ENCODE measurements at regions of chr1 and their contacts with region 1.

Region 1: DNA sequence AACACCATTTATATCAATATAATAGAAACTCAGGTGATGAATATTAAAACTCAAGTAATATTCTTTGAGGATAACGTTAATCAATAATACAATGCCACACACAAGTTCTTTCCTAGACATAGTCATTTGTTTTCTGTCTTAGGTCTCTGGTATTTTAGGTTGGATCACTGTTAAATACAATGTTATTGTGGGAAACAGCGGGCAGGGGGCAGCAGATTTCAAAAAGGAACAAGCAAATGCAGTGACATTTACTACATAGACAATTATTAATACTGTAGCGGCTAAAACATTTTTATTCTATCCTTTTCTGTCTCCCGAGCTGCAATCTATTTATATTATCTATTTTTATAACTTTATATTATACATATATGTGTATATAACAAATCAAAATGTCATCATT is 186.4 kb upstream of the ZNHIT6 start:
- DNase-seq: peak in 1 of 2 experiments; percentile 50
- H3K4me3 ChIP-seq: no peak overlapping the region
- H3K27ac ChIP-seq: no peak overlapping the region
- H3K4me1 ChIP-seq: no peaks in the 10 kb centered on the region
- H3K27me3 ChIP-seq: no peaks in the 10 kb centered on the region
- CTCF ChIP-seq: peak in 2 of 3 experiments; percentile 28 to 47; a peak in 2 of 4 replicates
- EP300 ChIP-seq: no peak
- POLR2A ChIP-seq: no peak
- RAD21 ChIP-seq: peak; percentile 54 to 59

Region 2: DNA sequence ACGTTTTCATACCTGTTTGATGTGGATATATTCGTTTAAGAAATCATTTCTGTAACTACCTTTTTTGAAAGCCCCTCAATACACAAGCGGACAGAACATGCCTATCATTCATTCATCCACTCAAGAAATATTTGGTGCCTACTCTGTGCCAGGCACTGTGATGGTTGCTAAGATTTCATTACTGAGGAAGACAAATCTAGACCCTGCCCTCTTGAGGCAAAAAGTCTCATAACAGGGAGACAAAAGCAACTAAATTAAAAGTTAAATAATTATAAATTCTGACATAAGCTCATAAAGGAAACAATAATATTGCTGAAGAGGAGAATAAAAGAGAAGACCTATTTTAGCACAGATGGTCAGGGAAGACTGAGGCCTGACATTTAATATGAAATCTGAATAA is 17.1 kb after region 1 on chr1:
- CTCF ChIA-PET with region 1: interaction called, 20 read pairs
- POLR2A ChIA-PET with region 1: no interaction called
- DNase-seq: no peak
- H3K4me3 ChIP-seq: no peak overlapping the region
- H3K27ac ChIP-seq: no peak overlapping the region
- H3K4me1 ChIP-seq: no peaks in the 10 kb centered on the region
- H3K27me3 ChIP-seq: no peaks in the 10 kb centered on the region
- CTCF ChIP-seq: peak in 2 of 3 experiments; percentile 12 to 20; a peak in 2 of 4 replicates
- EP300 ChIP-seq: no peak
- POLR2A ChIP-seq: no peak
- RAD21 ChIP-seq: peak; percentile 31 to 38

Region 3: GRCh38 chr1:85952460-85952859 is 57.8 kb after region 1 on chr1:
- CTCF ChIA-PET with region 1: no interaction called
- POLR2A ChIA-PET with region 1: no interaction called
- DNase-seq: no peak
- H3K4me3 ChIP-seq: no peak overlapping the region
- H3K27ac ChIP-seq: no peak overlapping the region
- H3K4me1 ChIP-seq: no peaks in the 10 kb centered on the region
- H3K27me3 ChIP-seq: no peaks in the 10 kb centered on the region
- CTCF ChIP-seq: no peak
- EP300 ChIP-seq: no peak
- POLR2A ChIP-seq: no peak
- RAD21 ChIP-seq: no peak